Heart left ventricle (tissue), 16 donors: ENCODE measurements at regions of chr17 and their contacts with region 1.

Region 1: DNA sequence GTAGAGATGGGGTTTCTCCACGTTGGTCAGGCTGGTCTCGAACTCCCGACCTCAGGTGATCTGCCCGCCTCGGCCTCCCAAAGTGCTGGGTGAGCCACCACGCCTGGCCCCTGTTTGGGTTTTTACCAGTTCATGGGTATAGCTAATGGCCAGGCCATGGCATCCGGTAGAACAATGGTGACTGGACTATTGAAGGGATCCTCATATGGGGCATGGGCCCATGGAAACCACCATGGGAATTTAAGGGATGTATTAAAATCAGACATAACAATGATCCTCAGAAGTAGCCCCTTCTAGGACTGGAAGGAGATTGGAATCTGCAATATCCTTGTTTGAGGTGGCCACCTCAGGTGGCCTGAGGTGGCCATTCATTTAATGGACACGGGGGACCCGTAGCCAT is 17.5 kb upstream of the GUCY2D start:
- DNase-seq: no peak
- ATAC-seq: no peak
- H3K4me3 ChIP-seq: no peak overlapping the region
- H3K27ac ChIP-seq: no peak overlapping the region
- H3K4me1 ChIP-seq: peaks cover 0 to 20% (median under 1%) of the 10 kb centered on the region in 12 donors
- H3K27me3 ChIP-seq: peaks cover 0 to 22% (median 0%) of the 10 kb centered on the region in 9 donors
- CTCF ChIP-seq: no peak
- POLR2A ChIP-seq: no peak

Region 2: GRCh38 chr17:7867881-7868329 is 117.0 kb before region 1 on chr17:
- intact Hi-C with region 1: loop called in 9 of 10 experiments (anchors 1 to 5 kb)
- DNase-seq: no peak
- ATAC-seq: no peak
- H3K4me3 ChIP-seq: no peak overlapping the region
- H3K27ac ChIP-seq: peak overlapping the region in 1 of 12 donors; percentile 24
- H3K4me1 ChIP-seq: peaks cover 0 to 13% (median 0%) of the 10 kb centered on the region in 12 donors
- H3K27me3 ChIP-seq: no peaks in the 10 kb centered on the region
- CTCF ChIP-seq: no peak
- POLR2A ChIP-seq: no peak

Region 3: GRCh38 chr17:8029135-8029534 is 44.2 kb after region 1 on chr17:
- intact Hi-C with region 1: no loop called
- DNase-seq: no peak
- ATAC-seq: no peak
- H3K4me3 ChIP-seq: no peak overlapping the region
- H3K27ac ChIP-seq: no peak overlapping the region
- H3K4me1 ChIP-seq: peaks cover 0 to 9% (median 0%) of the 10 kb centered on the region in 12 donors
- H3K27me3 ChIP-seq: peaks cover 0 to 35% (median 3%) of the 10 kb centered on the region in 9 donors
- CTCF ChIP-seq: no peak
- POLR2A ChIP-seq: no peak